Activated CD8-positive, alpha-beta T cell treated with anti-CD3 and anti-CD28 coated beads, Interleukin-2, amount 10 ng/mL, durations not matched to agents 7 days and 5 days (primary cell): ENCODE measurements at regions of chr1 and their contacts with region 1.

Region 1: DNA sequence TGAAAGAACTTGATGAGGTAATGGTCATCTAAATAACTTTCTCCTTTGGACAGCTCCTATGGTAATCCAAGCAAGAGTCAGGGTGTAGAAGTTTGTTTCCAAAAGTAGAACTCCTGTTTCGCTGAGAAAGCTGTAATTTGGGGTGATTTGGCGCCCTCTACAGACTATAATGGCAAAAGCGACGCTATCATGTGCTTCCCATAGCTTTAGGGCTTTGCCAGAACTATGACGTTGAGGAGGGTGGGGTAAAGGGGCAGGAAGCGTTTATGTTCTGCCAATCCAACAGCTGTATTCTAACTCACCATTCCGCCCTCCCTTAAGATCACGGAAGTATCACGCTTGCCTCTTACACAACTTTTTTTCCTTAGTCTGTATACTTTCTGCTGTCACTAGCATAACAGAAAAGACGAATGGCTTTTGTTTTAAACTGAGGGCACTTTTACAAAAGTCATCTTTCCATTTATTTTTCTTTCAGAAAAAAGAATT is at the start of gene FMO4:
- DNase-seq: peak; percentile 91
- ATAC-seq: peak; percentile 100
- H3K4me3 Mint-ChIP-seq: peak within 1 kb of the TSS; percentile 71
- H3K27ac Mint-ChIP-seq: peak within 1 kb of the TSS; percentile 77
- H3K4me1 Mint-ChIP-seq: peaks cover 12% of the 10 kb centered on the region
- H3K27me3 Mint-ChIP-seq: no peaks in the 10 kb centered on the region
- total RNA-seq, gene FMO4: 1.4 to 1.5 TPM

Region 2: GRCh38 chr1:170687621-170688020 is 626.3 kb before region 1 on chr1:
- CTCF ChIA-PET with region 1: interaction called, 19 read pairs
- POLR2A ChIA-PET with region 1: no interaction called
- DNase-seq: no peak
- ATAC-seq: no peak
- H3K4me3 Mint-ChIP-seq: no peak overlapping the region
- H3K27ac Mint-ChIP-seq: no peak overlapping the region
- H3K4me1 Mint-ChIP-seq: peaks cover 3% of the 10 kb centered on the region
- H3K27me3 Mint-ChIP-seq: peaks cover 10% of the 10 kb centered on the region

Region 3: GRCh38 chr1:170967042-170967910 is 346.6 kb before region 1 on chr1:
- CTCF ChIA-PET with region 1: interaction called, 43 read pairs
- POLR2A ChIA-PET with region 1: no interaction called
- DNase-seq: no peak
- ATAC-seq: no peak
- H3K4me3 Mint-ChIP-seq: no peak overlapping the region
- H3K27ac Mint-ChIP-seq: no peak overlapping the region
- H3K4me1 Mint-ChIP-seq: no peaks in the 10 kb centered on the region
- H3K27me3 Mint-ChIP-seq: peaks cover 8% of the 10 kb centered on the region

Region 4: GRCh38 chr1:171081314-171081753 is 232.5 kb before region 1 on chr1:
- CTCF ChIA-PET with region 1: interaction called, 21 read pairs
- POLR2A ChIA-PET with region 1: interaction called, 3 read pairs
- DNase-seq: no peak
- ATAC-seq: no peak
- H3K4me3 Mint-ChIP-seq: no peak overlapping the region
- H3K27ac Mint-ChIP-seq: no peak overlapping the region
- H3K4me1 Mint-ChIP-seq: no peaks in the 10 kb centered on the region
- H3K27me3 Mint-ChIP-seq: no peaks in the 10 kb centered on the region

Region 5: DNA sequence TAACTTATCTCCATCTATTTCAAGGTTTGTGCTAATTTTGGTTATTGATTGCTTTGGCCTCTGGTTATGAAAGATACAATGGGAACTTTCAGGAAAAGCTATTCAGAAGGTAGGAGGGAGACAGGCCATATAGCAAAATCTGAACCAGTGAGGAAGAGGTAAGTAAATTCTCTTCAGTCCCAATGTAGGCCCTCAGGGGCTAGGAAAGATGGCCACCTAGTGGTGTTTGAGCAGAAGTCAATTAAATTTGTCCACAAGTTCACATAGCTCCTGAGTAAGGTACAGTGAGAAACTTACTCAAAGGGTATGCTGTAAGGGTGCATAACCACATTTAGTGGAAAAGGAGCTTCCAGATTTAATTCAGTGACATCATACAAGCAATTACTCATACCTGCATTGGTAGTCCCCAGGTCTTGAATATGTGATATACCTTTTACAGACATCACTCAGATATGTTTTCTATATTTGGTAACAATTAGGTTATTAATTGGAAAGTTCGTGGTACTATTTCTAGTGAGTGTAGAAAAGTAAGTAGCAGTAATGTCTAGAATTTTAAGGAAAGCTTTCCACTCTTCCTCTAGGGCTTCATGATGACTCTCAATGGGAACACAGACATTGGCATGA is 87.0 kb before region 1 on chr1:
- CTCF ChIA-PET with region 1: interaction called, 18 read pairs
- POLR2A ChIA-PET with region 1: no interaction called
- DNase-seq: peak; percentile 27
- ATAC-seq: peak; percentile 70
- H3K4me3 Mint-ChIP-seq: no peak overlapping the region
- H3K27ac Mint-ChIP-seq: no peak overlapping the region
- H3K4me1 Mint-ChIP-seq: no peaks in the 10 kb centered on the region
- H3K27me3 Mint-ChIP-seq: peaks cover 10% of the 10 kb centered on the region

Region 6: GRCh38 chr1:171245458-171246064 is 68.3 kb before region 1 on chr1:
- CTCF ChIA-PET with region 1: interaction called, 66 read pairs
- POLR2A ChIA-PET with region 1: no interaction called
- DNase-seq: peak; percentile 34
- ATAC-seq: peak; percentile 51
- H3K4me3 Mint-ChIP-seq: no peak overlapping the region
- H3K27ac Mint-ChIP-seq: no peak overlapping the region
- H3K4me1 Mint-ChIP-seq: no peaks in the 10 kb centered on the region
- H3K27me3 Mint-ChIP-seq: peaks cover 33% of the 10 kb centered on the region

Region 7: GRCh38 chr1:171251042-171251951 is 62.6 kb before region 1 on chr1:
- CTCF ChIA-PET with region 1: interaction called, 66 read pairs
- POLR2A ChIA-PET with region 1: no interaction called
- DNase-seq: peak; percentile 43
- ATAC-seq: peak; percentile 57
- H3K4me3 Mint-ChIP-seq: peak overlapping the region; percentile 78
- H3K27ac Mint-ChIP-seq: no peak overlapping the region
- H3K4me1 Mint-ChIP-seq: peaks cover 18% of the 10 kb centered on the region
- H3K27me3 Mint-ChIP-seq: peaks cover 47% of the 10 kb centered on the region